ENCODE measurements at regions of chr17 and their contacts with region 1.

Region 1: DNA sequence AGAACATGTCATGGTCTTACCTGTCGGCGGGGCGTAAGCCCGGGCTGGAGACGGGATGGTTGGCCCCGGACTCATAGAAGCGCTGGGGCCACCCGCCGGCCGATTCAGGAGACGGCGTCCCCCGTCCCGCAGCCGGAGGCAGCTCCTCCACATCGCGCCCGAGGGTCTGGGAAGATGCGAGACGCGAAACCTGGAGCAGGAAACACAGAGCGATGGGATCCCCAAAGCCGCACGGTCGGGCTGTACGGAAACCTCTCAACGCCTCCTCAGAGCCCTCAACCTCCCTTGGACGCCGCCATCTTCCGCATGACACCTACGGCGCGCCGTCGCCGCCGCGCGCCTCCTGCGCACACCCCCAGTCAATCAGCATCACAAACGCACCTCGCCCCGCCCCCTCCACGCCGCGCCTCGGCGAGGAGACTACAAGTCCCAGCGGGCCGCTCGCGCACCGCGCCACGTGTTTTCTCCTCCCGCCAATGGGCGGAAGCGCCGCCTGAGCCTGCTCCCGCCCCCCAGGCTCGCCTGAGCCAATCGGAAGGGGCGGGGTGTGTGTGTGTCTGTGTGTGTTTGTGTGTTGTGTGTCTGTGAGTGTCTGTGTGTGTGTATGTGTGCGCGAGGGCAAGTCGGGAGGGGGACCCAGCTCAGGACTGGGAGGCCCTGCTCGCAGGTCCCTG is at the starts of genes ATPAF2 and GID4:
- DNase-seq: peak; percentile 99 to 100 (median 100)
- ATAC-seq: peak; percentile 96 to 98 (median 96)
- H3K4me3 ChIP-seq: peak within 1 kb of the TSS; percentile 69 to 97 (median 90)
- H3K27ac ChIP-seq: peak within 1 kb of the TSS; percentile 29 to 76 (median 62)
- H3K4me1 ChIP-seq: peaks cover 0 to 45% (median 11%) of the 10 kb centered on the region in 3 donors
- H3K27me3 ChIP-seq: no peaks in the 10 kb centered on the region
- CTCF ChIP-seq: no peak
- total RNA-seq, gene ATPAF2: 7.3 to 18.0 (median 11.4) TPM
- total RNA-seq, gene GID4: 5.2 to 9.6 (median 6.0) TPM

Region 2: GRCh38 chr17:17675925-17676534 is 363.0 kb before region 1 on chr17:
- intact Hi-C with region 1: loop called in 2 of 3 experiments (anchors 10 kb)
- DNase-seq: no peak
- ATAC-seq: peak; percentile 13 to 56 (median 38)
- H3K4me3 ChIP-seq: no peak overlapping the region
- H3K27ac ChIP-seq: no peak overlapping the region
- H3K4me1 ChIP-seq: no peaks in the 10 kb centered on the region
- H3K27me3 ChIP-seq: no peaks in the 10 kb centered on the region
- CTCF ChIP-seq: no peak

Region 3: DNA sequence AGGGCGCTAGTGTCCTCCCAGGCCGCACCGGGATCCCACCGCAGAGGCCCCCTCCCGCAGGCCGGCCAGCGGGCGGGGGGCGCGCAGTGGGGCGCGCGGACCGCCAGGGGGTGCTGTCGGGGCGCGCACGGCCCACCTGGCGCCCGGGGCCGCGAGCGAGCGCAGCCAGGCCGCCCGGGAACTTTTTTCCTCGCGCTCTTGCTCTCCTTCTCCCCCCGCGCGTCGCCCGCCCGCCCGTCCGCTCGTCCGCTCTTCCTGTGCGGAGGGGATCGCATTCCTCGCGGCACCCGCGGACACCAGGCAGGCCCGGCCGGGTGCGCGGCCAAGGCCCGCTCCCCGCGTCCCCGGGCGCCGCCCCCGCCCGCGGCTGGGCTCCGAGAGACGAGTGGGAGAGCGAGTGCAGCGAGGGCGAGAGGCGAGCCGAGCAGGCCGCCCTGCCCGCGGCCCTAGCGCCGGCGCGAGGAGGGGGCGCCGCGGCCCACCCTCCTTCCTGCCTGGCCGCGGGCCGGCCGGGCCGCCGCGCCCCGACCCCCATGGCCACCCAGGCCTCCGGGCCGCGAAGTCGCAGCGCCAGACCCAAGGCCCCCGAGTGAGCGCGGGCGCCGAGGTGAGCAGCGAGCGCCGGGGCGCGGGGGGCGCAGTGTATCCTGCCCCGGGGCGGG is 357.7 kb before region 1 on chr17 and contains the start of gene RAI1:
- intact Hi-C with region 1: loop called in 2 of 3 experiments (anchors 10 kb)
- DNase-seq: peak; percentile 75 to 90 (median 81)
- ATAC-seq: peak; percentile 72 to 80 (median 73)
- H3K4me3 ChIP-seq: peak within 1 kb of the TSS; percentile 57 to 83 (median 68)
- H3K27ac ChIP-seq: peak within 1 kb of the TSS; percentile 87 to 95 (median 88)
- H3K4me1 ChIP-seq: peaks cover 6 to 27% (median 10%) of the 10 kb centered on the region in 3 donors
- H3K27me3 ChIP-seq: no peaks in the 10 kb centered on the region
- CTCF ChIP-seq: peak; percentile 41 to 85 (median 52)
- total RNA-seq, gene RAI1: 12.1 to 21.6 (median 13.5) TPM

Region 4: DNA sequence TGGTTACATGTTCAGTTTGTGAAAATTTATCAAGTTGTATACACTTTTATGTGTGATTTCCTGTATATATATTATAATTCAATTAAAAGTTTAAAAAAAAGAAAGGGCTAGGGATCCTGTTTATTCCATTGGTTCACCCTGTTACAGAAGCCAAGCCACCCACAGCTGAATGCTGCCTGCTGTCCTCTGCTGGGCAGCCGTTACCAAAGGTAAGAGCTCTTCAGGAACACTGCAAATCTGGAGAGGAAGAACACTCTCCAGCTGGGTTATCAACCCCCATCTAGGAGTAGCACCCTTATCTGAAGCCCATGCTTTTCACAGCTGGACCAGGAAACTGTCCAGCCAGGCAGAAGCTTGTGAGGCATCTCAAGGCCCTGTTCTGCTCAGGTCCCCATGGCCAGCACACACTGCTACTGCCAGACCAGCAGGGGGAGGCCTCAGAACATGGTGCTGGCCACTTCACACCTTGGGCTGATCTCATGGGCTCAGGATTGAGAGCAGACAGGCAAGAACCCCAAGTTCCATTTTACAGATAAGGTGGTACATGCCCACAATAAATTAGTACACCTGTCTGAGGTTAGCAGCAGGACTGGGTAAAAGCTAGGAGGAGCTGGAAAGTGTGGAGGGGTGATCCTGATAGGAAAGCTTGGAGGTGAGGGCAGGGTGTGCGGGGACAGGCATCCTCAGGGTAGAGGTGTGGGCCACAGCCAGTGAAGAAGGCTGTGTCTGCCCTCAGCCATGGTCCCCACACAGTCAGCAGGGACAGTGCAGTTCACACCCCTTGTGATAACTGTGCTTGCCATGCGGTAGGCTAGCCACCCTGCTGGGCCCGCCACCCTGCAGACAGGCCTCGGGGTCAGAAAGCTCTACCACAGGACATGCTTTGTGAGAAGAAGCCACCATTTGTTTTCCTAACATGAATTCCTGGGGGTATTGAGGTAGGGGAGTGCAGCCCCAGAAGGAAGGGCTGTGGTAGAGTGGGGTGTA is 147.9 kb before region 1 on chr17:
- intact Hi-C with region 1: loop called in 1 of 3 experiments (anchors 10 kb)
- DNase-seq: peak in 3 of 6 donors; percentile 20 to 50 (median 33)
- ATAC-seq: peak; percentile 80 to 96 (median 93)
- H3K4me3 ChIP-seq: no peak overlapping the region
- H3K27ac ChIP-seq: no peak overlapping the region
- H3K4me1 ChIP-seq: no peaks in the 10 kb centered on the region
- H3K27me3 ChIP-seq: no peaks in the 10 kb centered on the region
- CTCF ChIP-seq: peak in 3 of 4 donors; percentile 23 to 49 (median 36)

Region 5: GRCh38 chr17:17985555-17985954 is 53.4 kb before region 1 on chr17:
- intact Hi-C with region 1: no loop called
- DNase-seq: no peak
- ATAC-seq: no peak
- H3K4me3 ChIP-seq: no peak overlapping the region
- H3K27ac ChIP-seq: no peak overlapping the region
- H3K4me1 ChIP-seq: no peaks in the 10 kb centered on the region
- H3K27me3 ChIP-seq: no peaks in the 10 kb centered on the region
- CTCF ChIP-seq: no peak